Heart right ventricle (tissue), 16 donors: ENCODE measurements at regions of chr11 and their contacts with region 1.

Region 1: DNA sequence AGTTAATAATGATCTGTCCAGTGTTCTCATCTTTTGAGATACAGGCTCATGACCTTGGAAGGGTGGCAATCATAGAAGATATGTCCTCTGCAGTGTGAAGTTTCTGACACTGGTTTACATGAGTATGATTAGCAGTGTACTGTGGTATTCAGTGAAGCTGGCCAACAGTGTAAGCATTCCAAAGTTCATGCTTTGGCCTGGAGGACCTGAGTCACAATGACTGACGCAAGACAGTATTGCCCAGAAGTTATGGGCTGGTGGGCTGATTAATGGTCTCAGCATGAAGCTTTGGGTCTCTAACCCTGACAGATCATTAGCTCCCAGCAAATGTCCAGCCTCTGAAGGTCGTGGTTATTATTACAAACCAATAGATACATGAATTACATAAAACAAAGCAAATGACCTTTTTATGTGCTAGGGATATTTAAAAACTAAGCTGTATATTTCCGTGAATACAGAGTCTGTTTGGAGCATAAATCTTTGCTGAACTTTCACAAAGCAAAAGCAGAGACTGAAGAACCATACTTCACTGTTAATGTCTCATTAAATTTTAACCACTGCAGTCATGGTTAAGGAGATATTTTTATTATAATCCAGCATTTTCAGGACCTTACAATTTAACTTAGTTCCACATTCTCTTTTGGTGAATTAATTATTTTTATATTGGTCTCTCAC is 28.3 kb upstream of the USP47 start:
- DNase-seq: peak in 1 of 2 donors; percentile 53
- ATAC-seq: peak; percentile 91 to 98 (median 93)
- H3K4me3 ChIP-seq: no peak overlapping the region
- H3K27ac ChIP-seq: peak overlapping the region; percentile 6 to 79 (median 62)
- H3K4me1 ChIP-seq: peaks cover 0 to 24% (median 14%) of the 10 kb centered on the region in 9 donors
- H3K27me3 ChIP-seq: no peaks in the 10 kb centered on the region
- CTCF ChIP-seq: no peak

Region 2: GRCh38 chr11:10973416-10973815 is 840.0 kb before region 1 on chr11:
- intact Hi-C with region 1: no loop called
- DNase-seq: no peak
- ATAC-seq: no peak
- H3K4me3 ChIP-seq: no peak overlapping the region
- H3K27ac ChIP-seq: no peak overlapping the region
- H3K4me1 ChIP-seq: peaks cover 0 to 12% (median 0%) of the 10 kb centered on the region in 9 donors
- H3K27me3 ChIP-seq: no peaks in the 10 kb centered on the region
- CTCF ChIP-seq: no peak

Region 3: GRCh38 chr11:11604370-11604980 is 208.9 kb before region 1 on chr11:
- intact Hi-C with region 1: no loop called
- DNase-seq: no peak
- ATAC-seq: no peak
- H3K4me3 ChIP-seq: no peak overlapping the region
- H3K27ac ChIP-seq: no peak overlapping the region
- H3K4me1 ChIP-seq: peaks cover 0 to 31% (median 11%) of the 10 kb centered on the region in 9 donors
- H3K27me3 ChIP-seq: no peaks in the 10 kb centered on the region
- CTCF ChIP-seq: no peak

Region 4: GRCh38 chr11:11826260-11826659 is 12.8 kb after region 1 on chr11:
- intact Hi-C with region 1: no loop called
- DNase-seq: no peak
- ATAC-seq: no peak
- H3K4me3 ChIP-seq: no peak overlapping the region
- H3K27ac ChIP-seq: no peak overlapping the region
- H3K4me1 ChIP-seq: no peaks in the 10 kb centered on the region
- H3K27me3 ChIP-seq: no peaks in the 10 kb centered on the region
- CTCF ChIP-seq: no peak

Region 5: DNA sequence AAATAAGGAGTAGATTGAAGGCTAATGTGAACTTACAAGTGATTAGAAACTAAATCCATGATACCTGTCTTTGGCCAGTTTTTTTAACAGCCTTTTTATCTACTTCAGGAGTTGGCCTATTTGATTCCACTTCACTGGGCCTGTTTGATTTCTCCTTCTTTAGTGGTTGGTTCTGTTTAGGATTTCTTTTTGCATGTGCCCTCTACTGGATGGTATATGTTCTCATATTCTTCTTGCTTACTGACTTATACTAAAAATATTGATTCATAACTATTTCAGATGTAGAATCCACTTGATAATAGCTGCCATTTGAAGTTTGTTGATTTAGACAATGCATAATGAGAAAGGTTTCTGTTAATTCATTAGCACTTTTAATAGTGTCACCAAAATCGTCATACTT is 82.2 kb after region 1 on chr11:
- intact Hi-C with region 1: loop called in 3 of 10 experiments (anchors 10 kb)
- DNase-seq: no peak
- ATAC-seq: no peak
- H3K4me3 ChIP-seq: no peak overlapping the region
- H3K27ac ChIP-seq: no peak overlapping the region
- H3K4me1 ChIP-seq: peaks cover 0 to 6% (median 0%) of the 10 kb centered on the region in 9 donors
- H3K27me3 ChIP-seq: no peaks in the 10 kb centered on the region
- CTCF ChIP-seq: peak in 4 of 9 donors; percentile 25 to 38 (median 32)

Region 6: GRCh38 chr11:11916981-11917399 is 103.6 kb after region 1 on chr11:
- intact Hi-C with region 1: loop called in 4 of 10 experiments (anchors 10 kb)
- DNase-seq: no peak
- ATAC-seq: peak in 5 of 8 donors; percentile 34 to 73 (median 45)
- H3K4me3 ChIP-seq: no peak overlapping the region
- H3K27ac ChIP-seq: peak overlapping the region in 5 of 10 donors; percentile 3 to 51 (median 11)
- H3K4me1 ChIP-seq: peaks cover 0 to 19% (median 7%) of the 10 kb centered on the region in 9 donors
- H3K27me3 ChIP-seq: no peaks in the 10 kb centered on the region
- CTCF ChIP-seq: no peak

Region 7: DNA sequence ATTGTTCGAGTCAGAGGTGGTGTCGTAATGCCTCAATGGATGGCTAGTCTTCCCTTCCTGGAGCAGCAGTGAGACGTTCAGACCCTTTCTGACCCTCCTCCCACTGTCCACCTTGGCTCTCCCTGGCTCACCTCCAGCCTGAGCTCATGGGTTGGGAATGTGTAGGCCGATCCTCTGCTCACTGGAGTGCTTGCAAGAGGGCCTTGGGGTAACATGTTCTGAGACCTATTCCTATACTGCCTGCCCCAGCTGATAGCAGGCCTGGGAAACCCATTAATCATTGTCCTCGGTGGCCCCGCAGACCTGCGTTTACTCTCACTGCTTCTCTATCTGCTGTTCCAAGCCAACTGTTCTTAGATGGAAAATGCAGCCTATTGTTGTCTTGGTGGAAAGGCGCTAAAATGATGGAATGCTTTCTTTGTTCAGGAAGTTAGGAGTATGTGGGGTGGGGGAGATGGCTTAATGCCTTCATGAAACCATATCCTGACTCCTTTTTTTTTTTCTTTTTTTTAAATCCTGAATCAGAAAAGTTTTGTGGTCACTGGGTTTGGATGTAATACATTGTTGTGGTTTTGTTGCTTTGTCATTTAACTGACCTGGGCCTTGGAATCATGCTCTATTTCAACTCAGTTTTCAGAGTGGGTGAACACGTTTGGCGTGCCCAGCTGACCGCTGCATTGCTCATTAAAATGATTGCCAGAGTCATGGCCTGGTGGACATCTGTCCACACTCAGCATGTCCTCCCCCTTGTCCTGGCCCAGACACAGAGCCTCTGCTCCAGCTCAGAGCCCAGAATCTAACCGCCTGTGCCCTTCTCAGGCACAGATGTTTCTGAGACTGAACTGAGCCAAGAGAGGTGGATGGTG is 369.5 kb after region 1 on chr11:
- intact Hi-C with region 1: no loop called
- DNase-seq: peak in 1 of 2 donors; percentile 74
- ATAC-seq: peak; percentile 66 to 87 (median 78)
- H3K4me3 ChIP-seq: no peak overlapping the region
- H3K27ac ChIP-seq: peak overlapping the region in 9 of 10 donors; percentile 66 to 88 (median 78)
- H3K4me1 ChIP-seq: peaks cover 21 to 96% (median 73%) of the 10 kb centered on the region in 9 donors
- H3K27me3 ChIP-seq: no peaks in the 10 kb centered on the region
- CTCF ChIP-seq: no peak